ENCODE measurements at regions of chr17 and their contacts with region 1.

Region 1: GRCh38 chr17:83079352-83079747 is at the start of gene METRNL:
- DNase-seq: peak in 7 of 9 donors; percentile 22 to 79 (median 36)
- ATAC-seq: peak; percentile 60
- H3K4me3 ChIP-seq: peak within 1 kb of the TSS; percentile 46
- H3K4me3 Mint-ChIP-seq: peak within 1 kb of the TSS in 8 of 10 donors; percentile 36 to 76 (median 52)
- H3K27ac ChIP-seq: no peak within 1 kb of the TSS
- H3K27ac Mint-ChIP-seq: no peak within 1 kb of the TSS
- H3K4me1 ChIP-seq: peaks cover 0 to 23% of the 10 kb centered on the region in 2 donors
- H3K4me1 Mint-ChIP-seq: peaks cover 0 to 27% (median 10%) of the 10 kb centered on the region in 7 donors
- H3K27me3 ChIP-seq: no peaks in the 10 kb centered on the region
- H3K27me3 Mint-ChIP-seq: peaks cover 0 to 35% (median 5%) of the 10 kb centered on the region in 5 donors
- total RNA-seq, gene METRNL: 1.0 to 147 (median 10.3) TPM

Region 2: GRCh38 chr17:82985973-82986372 is 93.4 kb before region 1 on chr17:
- CTCF ChIA-PET with region 1: no interaction called
- POLR2A ChIA-PET with region 1: no interaction called
- intact Hi-C with region 1: loop called in 1 of 2 experiments (anchors 5 kb)
- DNase-seq: peak; percentile 35 to 76 (median 67)
- ATAC-seq: peak; percentile 94
- H3K4me3 ChIP-seq: peak overlapping the region; percentile 31
- H3K4me3 Mint-ChIP-seq: peak overlapping the region; percentile 72 to 89 (median 80)
- H3K27ac ChIP-seq: peak overlapping the region; percentile 18
- H3K27ac Mint-ChIP-seq: peak overlapping the region; percentile 73 to 94 (median 88)
- H3K4me1 ChIP-seq: peaks cover 22 to 25% of the 10 kb centered on the region in 2 donors
- H3K4me1 Mint-ChIP-seq: peaks cover 22 to 50% (median 42%) of the 10 kb centered on the region in 7 donors
- H3K27me3 ChIP-seq: no peaks in the 10 kb centered on the region
- H3K27me3 Mint-ChIP-seq: peaks cover 0 to 13% (median 0%) of the 10 kb centered on the region in 5 donors

Region 3: GRCh38 chr17:83030432-83030831 is 48.9 kb before region 1 on chr17:
- CTCF ChIA-PET with region 1: no interaction called
- POLR2A ChIA-PET with region 1: no interaction called
- intact Hi-C with region 1: no loop called
- DNase-seq: no peak
- ATAC-seq: no peak
- H3K4me3 ChIP-seq: no peak overlapping the region
- H3K4me3 Mint-ChIP-seq: no peak overlapping the region
- H3K27ac ChIP-seq: no peak overlapping the region
- H3K27ac Mint-ChIP-seq: no peak overlapping the region
- H3K4me1 ChIP-seq: no peaks in the 10 kb centered on the region
- H3K4me1 Mint-ChIP-seq: peaks cover 7 to 16% (median 10%) of the 10 kb centered on the region in 7 donors
- H3K27me3 ChIP-seq: no peaks in the 10 kb centered on the region
- H3K27me3 Mint-ChIP-seq: no peaks in the 10 kb centered on the region

Measured in naive thymus-derived CD4-positive, alpha-beta T cell (primary cell).